Aorta (tissue), 5 donors: ENCODE measurements at regions of chr3 and their contacts with region 1.

Region 1: GRCh38 chr3:169764452-169765274 is at the start of gene TERC:
- DNase-seq: peak; percentile 95 to 97
- ATAC-seq: peak; percentile 97
- H3K4me3 ChIP-seq: peak within 1 kb of the TSS; percentile 73 to 96
- H3K27ac ChIP-seq: peak within 1 kb of the TSS; percentile 97 to 99
- H3K4me1 ChIP-seq: no peaks in the 10 kb centered on the region
- H3K27me3 ChIP-seq: no peaks in the 10 kb centered on the region
- total RNA-seq, gene TERC: 12.4 TPM in 1 of 2 donors, not detected in the other

Region 2: GRCh38 chr3:168095611-168096209 is 1669.0 kb before region 1 on chr3 and contains the start of gene GOLIM4:
- intact Hi-C with region 1: loop called in 1 of 2 experiments (anchors 10 kb)
- DNase-seq: peak; percentile 97 to 98
- ATAC-seq: peak; percentile 98
- H3K4me3 ChIP-seq: peak within 1 kb of the TSS; percentile 57 to 63
- H3K27ac ChIP-seq: peak within 1 kb of the TSS; percentile 50 to 88
- H3K4me1 ChIP-seq: peaks cover 0 to 8% of the 10 kb centered on the region in 2 donors
- H3K27me3 ChIP-seq: no peaks in the 10 kb centered on the region
- total RNA-seq, gene GOLIM4: 44.6 to 48.8 TPM

Region 3: DNA sequence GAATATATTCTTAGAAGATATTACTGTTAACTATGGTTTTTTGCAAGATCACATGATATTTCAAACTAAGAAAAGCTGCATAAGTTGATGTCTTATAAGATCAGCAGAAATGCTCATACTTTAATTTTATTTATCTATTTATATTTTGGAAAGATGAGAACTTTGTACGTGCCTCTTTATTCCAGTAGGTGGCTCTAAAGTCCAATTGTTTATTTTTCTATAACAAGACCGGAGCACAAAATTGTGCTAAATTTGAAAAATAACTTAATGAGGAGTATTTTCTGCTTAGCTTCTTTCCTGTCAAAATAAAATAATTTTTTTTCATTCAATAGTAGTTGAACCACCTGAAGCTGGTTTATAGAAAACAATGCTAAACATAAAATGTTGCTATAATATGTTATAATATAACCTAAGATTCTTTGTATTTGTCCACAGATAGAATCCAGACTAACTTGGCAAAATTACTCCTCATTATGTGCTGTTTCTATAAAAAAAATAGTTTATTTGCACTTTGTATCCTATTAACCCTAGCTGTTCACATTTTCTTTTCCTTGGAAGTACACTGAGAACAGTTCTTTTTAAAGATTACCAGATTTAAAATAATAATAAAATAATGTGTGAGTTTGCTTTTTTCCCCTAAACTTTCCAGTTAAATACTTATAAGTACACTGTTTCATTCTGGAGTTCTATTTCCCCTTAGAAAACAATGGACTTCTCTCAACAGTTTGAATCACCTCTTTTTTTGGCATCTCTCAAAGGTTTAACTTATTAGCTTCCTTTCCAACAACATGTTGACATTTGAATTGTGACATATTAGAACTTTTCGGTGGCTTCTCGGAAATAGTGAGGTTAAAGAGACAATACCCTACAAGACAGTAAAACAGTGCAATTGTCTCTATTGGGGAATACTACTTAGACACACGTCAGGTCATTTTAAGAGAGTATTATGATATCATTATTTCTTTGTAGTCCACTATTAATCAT is 631.2 kb before region 1 on chr3:
- intact Hi-C with region 1: loop called in 1 of 2 experiments (anchors 10 kb)
- DNase-seq: no peak
- ATAC-seq: no peak
- H3K4me3 ChIP-seq: no peak overlapping the region
- H3K27ac ChIP-seq: no peak overlapping the region
- H3K4me1 ChIP-seq: peaks cover 0 to 2% of the 10 kb centered on the region in 2 donors
- H3K27me3 ChIP-seq: no peaks in the 10 kb centered on the region

Region 4: GRCh38 chr3:169149349-169149890 is 615.2 kb before region 1 on chr3:
- intact Hi-C with region 1: loop called in 1 of 2 experiments (anchors 10 kb)
- DNase-seq: peak; percentile 86 to 94
- ATAC-seq: peak; percentile 90
- H3K4me3 ChIP-seq: peak overlapping the region; percentile 25 to 65
- H3K27ac ChIP-seq: peak overlapping the region in 1 of 2 donors; percentile 38
- H3K4me1 ChIP-seq: peaks cover 0 to 2% of the 10 kb centered on the region in 2 donors
- H3K27me3 ChIP-seq: no peaks in the 10 kb centered on the region

Region 5: GRCh38 chr3:169780742-169781141 is 16.1 kb after region 1 on chr3:
- intact Hi-C with region 1: no loop called
- DNase-seq: no peak
- ATAC-seq: no peak
- H3K4me3 ChIP-seq: no peak overlapping the region
- H3K27ac ChIP-seq: no peak overlapping the region
- H3K4me1 ChIP-seq: no peaks in the 10 kb centered on the region
- H3K27me3 ChIP-seq: no peaks in the 10 kb centered on the region

Region 6: DNA sequence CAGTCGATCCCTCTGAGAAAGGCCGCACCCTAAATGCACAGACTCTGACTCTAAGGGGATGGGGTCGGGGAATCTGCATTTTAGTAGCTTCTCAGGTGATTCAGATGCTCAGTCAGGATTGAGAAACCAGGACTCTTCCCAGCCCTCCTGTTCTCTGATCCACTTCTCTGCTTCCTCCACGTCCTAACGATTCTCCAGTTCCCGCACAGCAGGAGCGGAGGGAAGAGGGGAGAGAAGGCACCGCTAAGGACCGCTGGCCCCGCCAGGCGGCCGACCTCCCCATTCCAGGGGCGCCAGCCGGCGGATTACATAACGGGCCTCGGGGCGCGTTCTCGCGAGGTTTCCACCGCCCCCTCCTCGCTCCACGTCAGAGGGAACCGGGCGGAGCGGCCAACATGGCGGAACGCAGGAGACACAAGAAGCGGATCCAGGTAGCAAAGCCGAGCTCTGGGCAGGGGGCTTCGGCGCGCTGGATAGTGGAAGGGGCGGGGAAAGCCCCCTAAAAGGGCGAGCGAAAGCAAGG is 201.8 kb after region 1 on chr3 and contains the start of gene SEC62:
- intact Hi-C with region 1: loop called (anchors 5 to 10 kb)
- DNase-seq: peak; percentile 96 to 98
- ATAC-seq: peak; percentile 99
- H3K4me3 ChIP-seq: peak within 1 kb of the TSS; percentile 87 to 90
- H3K27ac ChIP-seq: peak within 1 kb of the TSS in 1 of 2 donors; percentile 49
- H3K4me1 ChIP-seq: no peaks in the 10 kb centered on the region
- H3K27me3 ChIP-seq: no peaks in the 10 kb centered on the region
- total RNA-seq, gene SEC62: 116 to 125 TPM

Region 7: GRCh38 chr3:170397579-170398177 is 633.0 kb after region 1 on chr3:
- intact Hi-C with region 1: no loop called
- DNase-seq: no peak
- ATAC-seq: no peak
- H3K4me3 ChIP-seq: no peak overlapping the region
- H3K27ac ChIP-seq: no peak overlapping the region
- H3K4me1 ChIP-seq: no peaks in the 10 kb centered on the region
- H3K27me3 ChIP-seq: no peaks in the 10 kb centered on the region

Region 8: DNA sequence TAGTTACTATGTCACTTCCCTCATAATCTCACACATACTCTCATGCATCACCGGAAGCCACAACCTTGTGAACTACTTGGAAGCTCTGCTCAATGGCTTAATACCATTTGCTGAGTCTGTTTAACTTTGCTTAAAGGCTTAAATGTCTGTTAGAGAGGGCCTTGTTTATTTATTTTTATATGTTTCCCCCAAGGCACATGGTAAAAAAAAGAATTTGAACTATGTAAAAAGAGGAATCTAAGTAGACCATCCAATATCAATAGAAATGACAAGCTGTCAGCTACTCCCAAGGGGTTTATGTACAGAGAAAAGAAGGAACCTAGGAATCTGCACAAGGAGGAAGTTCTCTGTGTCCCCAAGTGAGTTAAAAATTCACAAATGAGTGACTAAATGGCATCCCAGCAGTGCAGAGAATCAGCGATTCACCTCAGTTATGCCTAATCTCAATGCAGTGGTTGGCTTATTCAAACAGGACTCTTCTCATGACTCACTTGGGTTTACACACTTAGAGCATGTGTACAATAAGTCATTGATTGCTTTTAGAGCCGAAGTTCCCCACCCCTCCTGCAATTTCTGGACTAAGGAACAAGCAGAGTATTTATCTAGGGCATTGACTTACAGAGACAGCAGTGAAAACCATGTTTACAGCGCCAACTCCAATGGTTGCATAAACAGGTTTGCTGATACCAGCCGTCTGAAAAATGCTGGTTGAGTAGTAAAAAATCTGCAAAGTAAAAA is 1237.5 kb after region 1 on chr3:
- intact Hi-C with region 1: no loop called
- DNase-seq: no peak
- ATAC-seq: no peak
- H3K4me3 ChIP-seq: no peak overlapping the region
- H3K27ac ChIP-seq: no peak overlapping the region
- H3K4me1 ChIP-seq: no peaks in the 10 kb centered on the region
- H3K27me3 ChIP-seq: no peaks in the 10 kb centered on the region